ENCODE measurements at regions of chr1 and their contacts with region 1.

Region 1: DNA sequence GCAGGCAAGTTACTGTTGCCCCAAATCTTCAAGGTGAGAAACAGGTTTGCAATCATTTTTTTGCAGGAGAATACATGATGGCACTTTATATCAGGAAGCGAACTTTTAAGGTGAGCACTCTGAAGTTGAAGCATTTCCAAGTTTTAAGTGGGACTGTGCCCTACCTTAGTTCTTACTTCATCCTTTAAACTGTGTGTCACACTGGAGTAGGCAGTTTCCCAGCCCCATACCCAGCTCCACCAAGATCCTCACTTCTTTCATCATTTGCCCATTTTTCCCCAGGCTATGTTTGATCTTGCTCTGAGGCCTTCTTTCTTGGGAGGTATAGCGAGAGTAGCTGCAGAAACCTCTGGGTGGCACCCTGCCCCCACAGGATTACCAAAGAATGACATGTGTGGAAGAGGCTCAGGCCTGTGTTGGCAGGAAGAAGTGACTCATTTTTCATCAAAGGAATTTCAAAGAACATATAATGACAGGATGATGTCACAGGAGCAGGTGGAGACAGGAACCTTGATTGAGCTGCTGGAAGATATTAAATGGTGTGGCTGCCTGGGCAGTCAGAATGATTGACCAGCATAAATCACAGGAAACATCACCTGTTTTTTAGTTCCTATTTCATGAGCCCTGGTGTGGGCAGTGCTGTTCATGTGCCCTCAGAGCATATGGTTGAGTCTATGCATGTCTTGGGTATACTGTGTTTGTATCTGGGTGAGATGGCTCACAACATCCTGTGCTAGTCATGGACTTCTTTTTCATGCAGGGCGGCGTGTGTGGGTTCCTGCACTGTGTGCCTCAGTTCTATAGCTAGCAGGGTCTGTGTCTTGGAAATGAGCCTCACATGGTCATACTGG is 20.8 kb upstream of the MACF1 start:
- DNase-seq: no peak
- H3K4me3 ChIP-seq: no peak overlapping the region
- H3K27ac ChIP-seq: no peak overlapping the region
- H3K27me3 ChIP-seq: no peaks in the 10 kb centered on the region
- CTCF ChIP-seq: peak; percentile 27; the same call in 1 of the 2 replicates

Region 2: DNA sequence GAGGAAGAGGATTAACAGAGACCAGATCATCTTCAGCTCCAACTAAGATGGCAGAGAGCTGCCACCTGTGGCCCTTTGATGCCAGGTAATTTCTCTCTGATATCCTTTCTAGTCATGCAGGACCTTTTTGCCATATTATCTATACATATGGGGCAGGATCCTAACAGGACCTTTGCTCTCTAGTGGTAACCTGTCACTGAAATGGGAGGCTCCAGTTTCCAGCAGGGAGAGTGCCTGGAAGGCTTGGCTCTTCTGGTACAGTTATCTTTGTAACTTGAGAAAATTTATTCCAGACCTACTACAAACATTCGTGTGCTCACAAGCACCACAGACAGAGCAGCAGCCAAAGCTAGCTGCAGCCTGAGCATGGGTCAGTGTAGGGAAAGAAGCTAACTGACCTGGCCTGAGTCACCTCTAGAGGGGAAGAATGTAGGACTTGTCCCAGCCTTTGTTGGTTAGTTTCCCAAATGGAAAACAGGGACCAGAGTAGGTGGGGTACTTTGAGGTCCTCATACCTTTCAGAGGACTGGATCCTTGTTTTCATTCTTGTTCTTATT is 65.8 kb before region 1 on chr1:
- CTCF ChIA-PET with region 1: no interaction called
- POLR2A ChIA-PET with region 1: no interaction called
- DNase-seq: no peak
- H3K4me3 ChIP-seq: no peak overlapping the region
- H3K27ac ChIP-seq: no peak overlapping the region
- H3K27me3 ChIP-seq: no peaks in the 10 kb centered on the region
- CTCF ChIP-seq: no peak

Region 3: GRCh38 chr1:39170731-39171667 is 12.7 kb before region 1 on chr1:
- CTCF ChIA-PET with region 1: no interaction called
- POLR2A ChIA-PET with region 1: interaction called, 13 read pairs
- DNase-seq: no peak
- H3K4me3 ChIP-seq: no peak overlapping the region
- H3K27ac ChIP-seq: no peak overlapping the region
- H3K27me3 ChIP-seq: no peaks in the 10 kb centered on the region
- CTCF ChIP-seq: no peak

Measured in AG04450 (cell line).